HepG2 (cell line): ENCODE measurements at regions of chr11 and their contacts with region 1.

Region 1: GRCh38 chr11:6603287-6604080 is at the starts of genes ILK and RRP8:
- DNase-seq: peak; percentile 79
- ATAC-seq: peak; percentile 83
- H3K4me3 ChIP-seq: peak within 1 kb of the TSS; percentile 86 to 97 (median 89)
- H3K27ac ChIP-seq: peak within 1 kb of the TSS; percentile 83
- H3K4me1 ChIP-seq: peaks cover 69% of the 10 kb centered on the region
- H3K27me3 ChIP-seq: no peaks in the 10 kb centered on the region; a peak in 1 of 5 replicates
- CTCF ChIP-seq: peak; percentile 56
- EP300 ChIP-seq: no peak; a peak in 1 of 4 replicates
- POLR2A ChIP-seq: peak; percentile 64 to 82
- RAD21 ChIP-seq: peak; percentile 54
- total RNA-seq, gene ILK: 70.3 and 78.1 TPM in 2 replicates
- total RNA-seq, gene RRP8: 21.6 and 29.1 TPM in 2 replicates

Region 2: GRCh38 chr11:5092821-5093585 is 1510.5 kb before region 1 on chr11:
- CTCF ChIA-PET with region 1: no interaction called
- POLR2A ChIA-PET with region 1: no interaction called
- in situ Hi-C with region 1: no loop called
- intact Hi-C with region 1: no loop called
- DNase-seq: no peak
- ATAC-seq: no peak
- H3K4me3 ChIP-seq: no peak overlapping the region
- H3K27ac ChIP-seq: no peak overlapping the region
- H3K4me1 ChIP-seq: no peaks in the 10 kb centered on the region
- H3K27me3 ChIP-seq: no peaks in the 10 kb centered on the region
- CTCF ChIP-seq: no peak
- EP300 ChIP-seq: no peak
- POLR2A ChIP-seq: no peak
- RAD21 ChIP-seq: no peak

Region 3: DNA sequence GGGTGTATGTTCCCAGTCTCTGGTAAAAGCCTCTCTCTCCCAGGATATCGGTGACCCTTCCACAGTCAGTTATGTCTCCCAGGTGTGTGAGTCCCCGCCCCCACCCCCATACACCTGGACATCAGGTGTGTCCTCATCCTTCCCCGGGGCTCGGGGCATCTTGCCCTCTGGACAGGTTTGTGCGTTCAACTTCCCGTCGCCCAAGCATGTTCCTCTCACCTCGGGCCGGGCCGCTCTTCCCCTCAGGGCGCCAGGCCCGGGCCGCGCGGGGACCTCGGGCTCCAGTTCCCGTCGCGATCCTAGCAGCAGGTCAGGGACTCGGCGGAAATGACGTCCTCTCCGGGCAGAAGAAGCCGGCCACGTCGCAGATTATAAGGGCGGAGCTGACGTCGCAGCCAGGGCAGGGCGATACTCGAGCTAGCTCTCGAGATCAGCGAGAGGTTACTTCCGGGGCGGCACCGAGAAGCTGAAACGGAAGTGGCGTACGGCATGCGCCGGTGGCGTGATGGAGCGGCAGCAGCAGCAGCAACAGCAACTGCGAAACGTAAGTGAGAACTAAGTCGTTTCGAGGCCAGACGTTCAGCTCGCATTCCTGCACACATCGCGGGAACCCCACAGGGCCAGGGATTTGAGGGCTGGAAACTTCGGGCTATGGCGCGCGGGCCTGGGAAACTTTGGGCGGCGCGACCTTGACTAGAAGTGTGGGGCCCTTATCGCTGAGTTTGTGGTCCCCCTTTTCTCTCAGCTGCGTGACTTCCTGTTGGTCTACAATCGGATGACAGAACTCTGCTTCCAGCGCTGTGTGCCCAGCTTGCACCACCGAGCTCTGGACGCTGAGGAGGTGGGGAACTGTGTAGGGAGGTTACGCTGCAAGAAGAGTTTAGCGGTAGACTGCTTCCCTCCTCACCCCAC is 122.2 kb before region 1 on chr11 and contains the starts of genes ARFIP2 and TIMM10B:
- CTCF ChIA-PET with region 1: no interaction called
- POLR2A ChIA-PET with region 1: interaction called, 6 read pairs
- in situ Hi-C with region 1: loop called (anchors 10 kb)
- intact Hi-C with region 1: no loop called
- DNase-seq: peak; percentile 96
- ATAC-seq: peak; percentile 96
- H3K4me3 ChIP-seq: peak within 1 kb of the TSS; percentile 86 to 92 (median 86)
- H3K27ac ChIP-seq: peak within 1 kb of the TSS; percentile 95
- H3K4me1 ChIP-seq: peaks cover 56% of the 10 kb centered on the region
- H3K27me3 ChIP-seq: no peaks in the 10 kb centered on the region; a peak in 1 of 5 replicates
- CTCF ChIP-seq: no peak; the same call in 1 of the 2 replicates
- EP300 ChIP-seq: peak in 1 of 2 experiments; percentile 43; a peak in 1 of 4 replicates
- POLR2A ChIP-seq: peak; percentile 94 to 98
- RAD21 ChIP-seq: 0 out of 2 replicates have a peak, but pooled peaks have one; percentile 9
- total RNA-seq, gene ARFIP2: 58.9 and 60.2 TPM in 2 replicates
- total RNA-seq, gene TIMM10B: 39.5 and 60.1 TPM in 2 replicates

Region 4: DNA sequence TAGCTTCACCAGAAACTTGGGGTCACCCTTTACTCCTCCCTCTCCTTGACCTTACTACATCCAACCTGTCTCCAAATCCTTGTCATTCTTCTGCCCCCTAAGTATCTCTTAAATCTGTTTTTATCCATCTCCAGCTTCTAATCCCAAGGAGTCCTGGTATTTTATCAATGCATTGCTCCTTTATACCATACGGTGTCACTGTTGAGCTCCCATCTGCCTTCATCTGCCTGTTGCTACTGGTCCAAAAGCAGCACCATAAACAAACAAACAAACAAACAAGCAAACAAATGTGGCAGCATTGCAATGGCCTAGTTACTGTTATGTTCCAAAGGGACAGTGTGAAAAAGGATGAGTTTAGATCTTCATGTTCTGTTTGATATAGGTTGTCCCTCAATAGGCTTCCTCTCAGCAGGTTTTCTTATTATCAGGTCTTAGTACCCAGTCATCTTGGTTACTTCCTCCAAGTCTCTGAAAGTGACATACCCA is 72.2 kb before region 1 on chr11:
- CTCF ChIA-PET with region 1: no interaction called
- POLR2A ChIA-PET with region 1: interaction called, 4 read pairs
- in situ Hi-C with region 1: no loop called
- intact Hi-C with region 1: loop called (anchors 5 kb)
- DNase-seq: peak; percentile 31
- ATAC-seq: peak; percentile 46; the same call in 1 of the 3 replicates
- H3K4me3 ChIP-seq: no peak overlapping the region
- H3K27ac ChIP-seq: no peak overlapping the region
- H3K4me1 ChIP-seq: no peaks in the 10 kb centered on the region
- H3K27me3 ChIP-seq: no peaks in the 10 kb centered on the region
- CTCF ChIP-seq: peak; percentile 83
- EP300 ChIP-seq: no peak
- POLR2A ChIP-seq: no peak
- RAD21 ChIP-seq: peak; percentile 61

Region 5: GRCh38 chr11:6619004-6619745 is 15.7 kb after region 1 on chr11 and contains the start of gene TPP1:
- CTCF ChIA-PET with region 1: no interaction called
- POLR2A ChIA-PET with region 1: interaction called, 36 read pairs
- in situ Hi-C with region 1: no loop called
- intact Hi-C with region 1: loop called (anchors 2 kb)
- DNase-seq: peak; percentile 91
- ATAC-seq: peak; percentile 93
- H3K4me3 ChIP-seq: peak within 1 kb of the TSS; percentile 67 to 94 (median 88)
- H3K27ac ChIP-seq: peak within 1 kb of the TSS; percentile 58
- H3K4me1 ChIP-seq: peaks cover 28% of the 10 kb centered on the region
- H3K27me3 ChIP-seq: peaks cover 12 to 40% of the 10 kb centered on the region in 2 experiments; a peak in 4 of 5 replicates
- CTCF ChIP-seq: peak; percentile 18; the same call in 1 of the 2 replicates
- EP300 ChIP-seq: peak in 1 of 2 experiments; percentile 50; a peak in 1 of 4 replicates
- POLR2A ChIP-seq: peak; percentile 81 to 88
- RAD21 ChIP-seq: no peak
- total RNA-seq, gene TPP1: 13.9 and 14.4 TPM in 2 replicates

Region 6: GRCh38 chr11:6629892-6630633 is 26.6 kb after region 1 on chr11:
- CTCF ChIA-PET with region 1: no interaction called
- POLR2A ChIA-PET with region 1: no interaction called
- in situ Hi-C with region 1: no loop called
- intact Hi-C with region 1: no loop called
- DNase-seq: no peak
- ATAC-seq: no peak; the same call in 2 of the 3 replicates
- H3K4me3 ChIP-seq: peak overlapping the region in 1 of 3 experiments; percentile 48; a peak in 2 of 6 replicates
- H3K27ac ChIP-seq: no peak overlapping the region
- H3K4me1 ChIP-seq: peaks cover 24% of the 10 kb centered on the region
- H3K27me3 ChIP-seq: peaks cover 9 to 67% of the 10 kb centered on the region in 2 experiments; a peak in 4 of 5 replicates
- CTCF ChIP-seq: no peak
- EP300 ChIP-seq: no peak
- POLR2A ChIP-seq: no peak
- RAD21 ChIP-seq: no peak

Region 7: DNA sequence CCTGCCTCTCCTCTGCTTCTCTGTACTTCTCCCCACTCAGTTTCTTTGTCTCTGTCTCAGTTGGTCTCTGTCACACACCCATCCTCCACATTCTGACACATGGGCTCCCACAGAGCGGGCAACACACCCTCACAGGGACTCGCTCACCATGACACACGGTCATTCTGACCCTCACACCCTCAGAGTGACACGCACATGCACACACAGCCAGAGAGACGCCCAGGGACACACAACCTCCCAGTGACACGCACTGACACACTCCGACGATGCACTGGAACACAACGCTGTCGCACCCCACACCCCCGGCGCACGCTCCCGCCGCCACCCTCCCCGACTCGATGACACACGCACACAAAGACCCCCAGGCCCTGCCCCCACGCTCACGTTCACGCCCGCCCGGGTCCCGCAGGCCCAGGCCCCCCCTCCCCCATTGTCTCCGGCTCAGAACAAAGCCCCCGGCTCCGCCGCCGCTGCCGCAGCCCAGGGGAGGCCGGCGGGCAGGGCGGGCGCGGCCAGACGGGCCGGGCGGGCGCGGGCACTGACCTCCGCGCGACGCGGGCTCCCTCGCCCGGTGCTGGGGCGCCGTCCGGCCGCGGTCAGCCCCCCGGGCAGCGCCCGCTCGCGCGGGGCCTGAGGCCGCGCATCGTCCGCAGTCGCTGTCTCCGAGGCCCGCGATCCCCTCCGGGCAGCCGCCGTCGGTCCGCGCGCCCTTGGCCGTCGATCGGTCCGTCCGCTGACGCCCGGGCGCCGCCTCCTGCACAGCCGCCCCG is 51.7 kb after region 1 on chr11:
- CTCF ChIA-PET with region 1: no interaction called
- POLR2A ChIA-PET with region 1: no interaction called
- in situ Hi-C with region 1: no loop called
- intact Hi-C with region 1: no loop called
- DNase-seq: no peak
- ATAC-seq: peak; percentile 73
- H3K4me3 ChIP-seq: peak overlapping the region in 1 of 3 experiments; percentile 37; a peak in 2 of 6 replicates
- H3K27ac ChIP-seq: no peak overlapping the region
- H3K4me1 ChIP-seq: peaks cover 12% of the 10 kb centered on the region
- H3K27me3 ChIP-seq: peaks cover 15 to 85% of the 10 kb centered on the region in 2 experiments
- CTCF ChIP-seq: no peak
- EP300 ChIP-seq: no peak
- POLR2A ChIP-seq: no peak
- RAD21 ChIP-seq: no peak

Region 8: DNA sequence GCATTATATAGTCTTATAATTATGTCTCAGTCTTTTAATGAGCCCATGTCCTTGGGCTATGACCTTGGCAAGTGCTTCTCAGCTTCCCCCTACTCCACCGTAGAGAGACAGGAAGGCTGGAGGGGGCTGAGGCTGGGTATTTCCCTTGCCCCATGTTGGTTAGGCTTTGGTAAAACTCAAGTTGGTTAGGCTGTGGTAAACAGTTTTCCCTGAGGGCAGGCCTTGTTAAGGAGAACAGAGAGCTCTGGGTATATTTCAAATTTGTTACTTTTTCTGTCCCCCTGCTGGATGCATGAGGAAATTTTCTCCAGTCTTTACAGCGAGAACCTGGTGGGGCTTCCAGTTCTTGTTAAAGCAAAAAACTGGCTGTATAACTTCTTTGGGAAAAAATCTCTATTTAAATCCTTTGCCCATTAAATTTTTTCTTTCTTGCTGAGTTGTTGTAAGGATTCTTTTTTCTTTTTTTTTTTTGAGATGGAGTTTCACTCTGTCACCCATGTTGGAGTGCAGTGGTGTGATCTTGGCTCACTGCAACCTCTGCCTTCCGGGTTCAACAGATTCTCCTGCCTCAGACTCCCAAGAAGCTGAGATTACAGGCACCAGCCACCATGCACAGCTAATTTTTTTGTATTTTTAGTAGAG is 64.4 kb after region 1 on chr11:
- CTCF ChIA-PET with region 1: interaction called, 4 read pairs
- POLR2A ChIA-PET with region 1: no interaction called
- in situ Hi-C with region 1: no loop called
- intact Hi-C with region 1: loop called (anchors 5 kb)
- DNase-seq: peak; percentile 41
- ATAC-seq: peak; percentile 83
- H3K4me3 ChIP-seq: no peak overlapping the region
- H3K27ac ChIP-seq: no peak overlapping the region
- H3K4me1 ChIP-seq: no peaks in the 10 kb centered on the region
- H3K27me3 ChIP-seq: peaks cover 0 to 13% of the 10 kb centered on the region in 2 experiments; a peak in 2 of 5 replicates
- CTCF ChIP-seq: peak; percentile 43
- EP300 ChIP-seq: no peak
- POLR2A ChIP-seq: no peak
- RAD21 ChIP-seq: no peak; the same call in 1 of the 2 replicates

Region 9: GRCh38 chr11:6771926-6772893 is 168.7 kb after region 1 on chr11 and contains the start of gene OR2AG2:
- CTCF ChIA-PET with region 1: no interaction called
- POLR2A ChIA-PET with region 1: no interaction called
- in situ Hi-C with region 1: no loop called
- intact Hi-C with region 1: no loop called
- DNase-seq: no peak
- ATAC-seq: no peak
- H3K4me3 ChIP-seq: no peak within 1 kb of the TSS
- H3K27ac ChIP-seq: no peak within 1 kb of the TSS
- H3K4me1 ChIP-seq: no peaks in the 10 kb centered on the region
- H3K27me3 ChIP-seq: peaks cover 0 to 5% of the 10 kb centered on the region in 2 experiments; a peak in 2 of 5 replicates
- CTCF ChIP-seq: no peak
- EP300 ChIP-seq: no peak
- POLR2A ChIP-seq: no peak
- RAD21 ChIP-seq: no peak
- total RNA-seq, gene OR2AG2: not detected in 2 replicates